ENCODE measurements at regions of chr12 and their contacts with region 1.

Region 1: GRCh38 chr12:31728917-31729640 is at the start of gene AMN1:
- DNase-seq: peak; percentile 99
- H3K4me3 ChIP-seq: peak within 1 kb of the TSS; percentile 61 to 69 (median 65)
- H3K27ac ChIP-seq: peak within 1 kb of the TSS; percentile 88 to 97 (median 92)
- H3K4me1 ChIP-seq: peaks cover 0 to 14% (median 12%) of the 10 kb centered on the region in 4 donors
- H3K27me3 ChIP-seq: no peaks in the 10 kb centered on the region
- CTCF ChIP-seq: no peak
- EP300 ChIP-seq: peak in 1 of 4 donors; percentile 60
- POLR2A ChIP-seq: peak; percentile 4 to 71
- total RNA-seq, gene AMN1: 5.5 to 13.2 (median 11.0) TPM

Region 2: DNA sequence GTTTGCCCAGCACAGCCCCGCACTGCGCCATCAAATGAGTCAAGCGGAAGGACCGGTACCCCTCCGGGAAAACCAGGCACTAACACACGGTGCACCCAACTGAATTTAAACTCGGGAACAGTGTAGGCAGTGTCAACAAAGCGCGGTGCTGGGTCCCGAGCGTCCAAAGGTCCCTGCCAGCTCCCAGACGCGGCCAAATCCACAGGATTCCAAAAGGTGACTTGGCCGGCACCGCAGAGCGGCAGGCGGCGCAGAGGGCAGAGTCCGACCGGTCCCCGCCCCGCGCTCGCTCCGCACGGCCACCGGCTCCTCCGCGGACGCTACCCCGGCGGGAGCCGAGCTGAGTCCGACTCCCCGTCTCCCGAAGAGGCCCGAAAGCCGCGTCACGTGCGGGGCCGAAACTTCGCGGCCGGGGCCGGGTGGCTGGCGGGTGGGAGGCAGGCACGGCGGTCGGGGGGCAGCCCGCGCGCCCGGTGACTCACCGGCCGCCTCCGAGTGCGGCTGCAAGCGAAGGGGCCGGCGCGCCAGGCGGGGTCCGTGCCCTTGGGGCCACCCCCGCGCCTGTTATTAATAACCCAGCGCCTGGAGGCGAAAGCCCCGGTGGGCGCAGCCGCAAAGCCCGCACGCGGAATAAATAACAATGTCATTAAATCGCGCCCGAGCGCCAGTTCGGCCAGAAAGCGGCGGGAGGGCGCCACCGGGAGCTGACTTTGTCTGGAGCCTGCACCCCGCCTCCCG is 139.0 kb before region 1 on chr12:
- intact Hi-C with region 1: loop called (anchors 5 kb)
- DNase-seq: peak; percentile 84
- H3K4me3 ChIP-seq: peak overlapping the region; percentile 61 to 97 (median 94)
- H3K27ac ChIP-seq: peak overlapping the region; percentile 96 to 99 (median 98)
- H3K4me1 ChIP-seq: peaks cover 0 to 36% (median 14%) of the 10 kb centered on the region in 4 donors
- H3K27me3 ChIP-seq: no peaks in the 10 kb centered on the region
- CTCF ChIP-seq: no peak
- EP300 ChIP-seq: no peak
- POLR2A ChIP-seq: no peak

Region 3: DNA sequence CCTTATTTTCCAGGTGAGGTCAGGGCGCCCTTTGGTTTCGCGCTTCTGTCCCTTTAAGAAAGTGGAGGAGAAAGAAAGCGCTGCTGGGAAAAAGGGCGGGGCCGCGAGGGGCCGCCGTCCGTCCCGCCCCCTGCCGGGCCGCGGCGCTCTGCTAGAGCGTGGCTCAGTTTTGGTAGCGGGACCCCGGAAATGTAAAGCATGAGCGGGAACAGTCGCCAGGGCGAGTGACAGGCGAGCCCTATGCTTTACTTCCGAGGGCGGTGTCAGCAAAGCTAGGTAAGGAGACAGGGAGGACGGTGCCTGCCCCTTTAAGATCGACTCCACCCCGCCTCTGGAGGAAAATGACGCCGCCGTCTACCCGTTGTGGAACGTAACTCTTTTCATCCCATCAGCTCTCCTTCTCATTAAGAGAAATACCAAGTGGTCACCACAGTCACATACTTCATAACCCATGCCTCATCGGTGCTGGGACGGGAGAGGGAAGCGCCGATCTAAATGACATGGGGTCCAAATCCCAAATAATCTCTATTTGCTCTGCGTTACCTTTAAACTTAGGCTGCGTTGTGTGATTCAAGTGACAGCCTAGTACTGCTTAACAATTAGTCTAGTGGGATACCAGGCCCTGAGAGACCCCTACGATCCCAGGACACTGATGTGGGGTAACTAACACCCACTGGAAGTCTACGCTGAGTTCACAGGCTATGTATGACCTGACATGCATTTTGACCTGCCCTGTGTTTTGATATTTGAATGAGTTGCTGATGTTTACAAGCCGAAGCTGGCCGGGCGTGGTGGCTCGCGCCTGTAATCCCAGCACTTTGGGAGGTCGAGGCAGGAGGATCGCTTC is 69.8 kb before region 1 on chr12 and contains the start of gene ETFBKMT:
- intact Hi-C with region 1: loop called (anchors 2 kb)
- DNase-seq: peak; percentile 94
- H3K4me3 ChIP-seq: peak within 1 kb of the TSS; percentile 61 to 75 (median 70)
- H3K27ac ChIP-seq: peak within 1 kb of the TSS; percentile 91 to 96 (median 94)
- H3K4me1 ChIP-seq: peaks cover 0 to 6% (median 4%) of the 10 kb centered on the region in 4 donors
- H3K27me3 ChIP-seq: no peaks in the 10 kb centered on the region
- CTCF ChIP-seq: peak in 2 of 4 experiments; percentile 28 to 63
- EP300 ChIP-seq: no peak
- POLR2A ChIP-seq: no peak
- total RNA-seq, gene ETFBKMT: 2.5 to 4.4 (median 3.0) TPM

Region 4: GRCh38 chr12:31959161-31959700 is 230.2 kb after region 1 on chr12 and contains the start of gene RESF1:
- intact Hi-C with region 1: loop called (anchors 1 kb)
- DNase-seq: peak; percentile 91
- H3K4me3 ChIP-seq: peak within 1 kb of the TSS; percentile 67 to 79 (median 72)
- H3K27ac ChIP-seq: peak within 1 kb of the TSS; percentile 92 to 97 (median 94)
- H3K4me1 ChIP-seq: peaks cover 0 to 36% (median 24%) of the 10 kb centered on the region in 4 donors
- H3K27me3 ChIP-seq: no peaks in the 10 kb centered on the region
- CTCF ChIP-seq: no peak
- EP300 ChIP-seq: no peak
- POLR2A ChIP-seq: peak; percentile 40 to 62
- total RNA-seq, gene RESF1: 33.5 to 49.4 (median 41.2) TPM

Region 5: DNA sequence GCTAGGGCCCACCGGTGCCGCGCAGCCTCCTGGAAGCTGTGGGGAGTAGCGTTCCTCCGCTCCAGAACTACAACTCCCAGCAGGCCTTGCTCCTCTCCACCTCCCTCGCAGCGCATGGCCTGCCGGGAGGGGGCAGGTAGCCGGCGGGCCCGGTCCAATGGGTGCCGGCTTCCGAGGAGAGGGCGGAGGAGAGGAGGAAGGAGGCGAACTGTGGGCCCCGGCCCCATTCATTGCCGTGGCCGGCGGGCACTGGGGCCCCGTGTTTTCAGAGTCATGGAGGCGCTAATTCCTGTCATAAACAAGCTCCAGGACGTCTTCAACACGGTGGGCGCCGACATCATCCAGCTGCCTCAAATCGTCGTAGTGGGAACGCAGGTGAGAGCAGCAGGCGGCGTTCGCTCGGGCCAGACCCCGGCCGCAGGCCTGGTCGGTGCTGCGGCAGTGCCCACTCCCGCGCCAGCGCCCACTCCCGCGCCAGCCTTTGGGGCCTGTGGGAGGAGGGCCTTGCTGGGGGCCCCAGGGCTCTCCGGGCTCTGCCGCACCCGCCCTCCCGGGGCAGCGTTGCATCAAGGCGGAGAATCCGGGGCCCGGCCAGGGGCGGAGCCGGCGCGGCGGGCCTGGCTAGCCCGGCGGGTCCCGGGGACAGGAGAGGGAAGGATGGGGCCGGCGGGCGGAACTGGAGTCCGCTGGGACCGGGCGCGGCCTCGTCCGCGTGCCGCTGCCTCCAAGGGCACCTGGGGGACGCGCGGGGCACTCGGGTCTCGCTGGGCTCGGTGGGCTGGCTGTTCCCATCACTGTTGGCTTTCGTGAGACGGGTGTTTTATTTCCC is 950.2 kb after region 1 on chr12 and contains the start of gene DNM1L:
- intact Hi-C with region 1: loop called (anchors 5 kb)
- DNase-seq: peak; percentile 97
- H3K4me3 ChIP-seq: peak within 1 kb of the TSS; percentile 65 to 97 (median 82)
- H3K27ac ChIP-seq: peak within 1 kb of the TSS; percentile 90 to 99 (median 97)
- H3K4me1 ChIP-seq: peaks cover 0 to 15% (median 15%) of the 10 kb centered on the region in 4 donors
- H3K27me3 ChIP-seq: no peaks in the 10 kb centered on the region
- CTCF ChIP-seq: no peak
- EP300 ChIP-seq: peak in 1 of 4 donors; percentile 3
- POLR2A ChIP-seq: peak; percentile 67 to 80
- total RNA-seq, gene DNM1L: 67.3 to 77.2 (median 72.6) TPM

Measured in sigmoid colon (tissue), 7 donors.